ENCODE measurements at regions of chr1 and their contacts with region 1.

Region 1: DNA sequence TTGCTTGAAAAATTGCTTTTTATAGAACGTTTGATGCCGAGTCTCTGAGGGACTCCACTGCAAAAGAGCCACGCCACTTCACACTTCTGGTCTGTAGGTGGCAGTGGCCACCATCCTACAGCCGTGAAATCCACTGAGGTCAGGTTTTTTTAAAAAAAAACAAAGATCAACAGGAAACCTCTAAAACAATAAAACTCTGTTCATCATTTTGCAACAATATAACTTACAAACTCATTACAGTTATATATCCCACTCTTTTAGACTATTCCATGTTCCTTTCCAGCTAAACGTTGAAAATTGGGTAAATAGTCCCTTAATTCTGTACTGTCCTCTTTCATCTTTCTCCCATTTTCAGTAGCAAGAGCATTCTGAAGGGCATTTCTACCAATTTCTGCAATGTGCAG is 64.6 kb upstream of the FMN2 start:
- DNase-seq: peak; percentile 81
- H3K4me3 Mint-ChIP-seq: no peak overlapping the region
- H3K27ac Mint-ChIP-seq: no peak overlapping the region
- H3K4me1 Mint-ChIP-seq: peaks cover 13% of the 10 kb centered on the region
- H3K27me3 Mint-ChIP-seq: no peaks in the 10 kb centered on the region
- CTCF ChIP-seq: peak; percentile 100

Region 2: GRCh38 chr1:239939602-239940001 is 87.5 kb before region 1 on chr1:
- CTCF ChIA-PET with region 1: no interaction called
- POLR2A ChIA-PET with region 1: no interaction called
- intact Hi-C with region 1: no loop called
- DNase-seq: peak; percentile 23
- H3K4me3 Mint-ChIP-seq: no peak overlapping the region
- H3K27ac Mint-ChIP-seq: no peak overlapping the region
- H3K4me1 Mint-ChIP-seq: no peaks in the 10 kb centered on the region
- H3K27me3 Mint-ChIP-seq: no peaks in the 10 kb centered on the region
- CTCF ChIP-seq: no peak

Region 3: GRCh38 chr1:240014051-240014450 is 13.0 kb before region 1 on chr1:
- CTCF ChIA-PET with region 1: interaction called, 45 read pairs
- POLR2A ChIA-PET with region 1: interaction called, 3 read pairs
- intact Hi-C with region 1: no loop called
- DNase-seq: no peak
- H3K4me3 Mint-ChIP-seq: no peak overlapping the region
- H3K27ac Mint-ChIP-seq: no peak overlapping the region
- H3K4me1 Mint-ChIP-seq: no peaks in the 10 kb centered on the region
- H3K27me3 Mint-ChIP-seq: no peaks in the 10 kb centered on the region
- CTCF ChIP-seq: no peak

Region 4: GRCh38 chr1:240044620-240045019 is 17.6 kb after region 1 on chr1:
- CTCF ChIA-PET with region 1: interaction called, 13 read pairs
- POLR2A ChIA-PET with region 1: no interaction called
- intact Hi-C with region 1: no loop called
- DNase-seq: peak; percentile 47
- H3K4me3 Mint-ChIP-seq: no peak overlapping the region
- H3K27ac Mint-ChIP-seq: no peak overlapping the region
- H3K4me1 Mint-ChIP-seq: no peaks in the 10 kb centered on the region
- H3K27me3 Mint-ChIP-seq: no peaks in the 10 kb centered on the region
- CTCF ChIP-seq: no peak

Region 5: DNA sequence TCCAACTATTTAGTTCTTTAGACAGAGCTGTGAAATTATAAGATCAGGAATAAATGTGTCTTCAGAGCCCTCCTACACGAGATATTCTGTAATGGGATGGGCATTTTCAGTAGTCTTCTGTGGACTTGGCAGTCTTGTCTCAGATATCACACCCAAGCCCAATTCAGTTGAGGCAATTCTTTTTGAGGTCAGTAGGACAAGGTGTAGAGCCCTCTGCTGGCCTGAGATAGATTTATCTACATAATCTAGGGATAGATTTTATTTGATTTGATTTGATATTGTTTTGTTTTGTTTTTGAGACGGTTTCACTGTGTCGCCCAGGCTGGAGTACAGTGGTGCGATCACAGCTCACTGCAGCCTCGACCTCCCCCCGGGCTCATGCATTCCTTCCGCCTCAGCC is 142.1 kb after region 1 on chr1:
- CTCF ChIA-PET with region 1: interaction called, 127 read pairs
- POLR2A ChIA-PET with region 1: no interaction called
- intact Hi-C with region 1: loop called (anchors 1 kb)
- DNase-seq: peak; percentile 59
- H3K4me3 Mint-ChIP-seq: no peak overlapping the region
- H3K27ac Mint-ChIP-seq: no peak overlapping the region
- H3K4me1 Mint-ChIP-seq: no peaks in the 10 kb centered on the region
- H3K27me3 Mint-ChIP-seq: no peaks in the 10 kb centered on the region
- CTCF ChIP-seq: peak; percentile 61

Region 6: GRCh38 chr1:240602189-240602588 is 575.1 kb after region 1 on chr1:
- CTCF ChIA-PET with region 1: interaction called, 8 read pairs
- POLR2A ChIA-PET with region 1: no interaction called
- intact Hi-C with region 1: loop called (anchors 2 kb)
- DNase-seq: no peak
- H3K4me3 Mint-ChIP-seq: no peak overlapping the region
- H3K27ac Mint-ChIP-seq: no peak overlapping the region
- H3K4me1 Mint-ChIP-seq: no peaks in the 10 kb centered on the region
- H3K27me3 Mint-ChIP-seq: no peaks in the 10 kb centered on the region
- CTCF ChIP-seq: peak; percentile 49